ENCODE measurements at regions of chr14 and their contacts with region 1.

Region 1: GRCh38 chr14:94080471-94081289 is at the start of gene DDX24:
- DNase-seq: peak; percentile 96
- H3K4me3 Mint-ChIP-seq: peak within 1 kb of the TSS; percentile 99
- H3K27ac Mint-ChIP-seq: peak within 1 kb of the TSS; percentile 100
- H3K4me1 Mint-ChIP-seq: peaks cover 47% of the 10 kb centered on the region
- H3K27me3 Mint-ChIP-seq: no peaks in the 10 kb centered on the region
- total RNA-seq, gene DDX24: 276 and 277 TPM in 2 replicates

Region 2: GRCh38 chr14:94026173-94026888 is 54.3 kb before region 1 on chr14 and contains the start of gene OTUB2:
- intact Hi-C with region 1: loop called (anchors 2 kb)
- DNase-seq: peak; percentile 97
- H3K4me3 Mint-ChIP-seq: peak within 1 kb of the TSS; percentile 74
- H3K27ac Mint-ChIP-seq: peak within 1 kb of the TSS; percentile 56
- H3K4me1 Mint-ChIP-seq: peaks cover 34% of the 10 kb centered on the region
- H3K27me3 Mint-ChIP-seq: no peaks in the 10 kb centered on the region
- total RNA-seq, gene OTUB2: 2.1 and 2.3 TPM in 2 replicates

Region 3: GRCh38 chr14:94056579-94057308 is 23.9 kb before region 1 on chr14:
- intact Hi-C with region 1: loop called (anchors 2 kb)
- DNase-seq: peak; percentile 41
- H3K4me3 Mint-ChIP-seq: no peak overlapping the region
- H3K27ac Mint-ChIP-seq: peak overlapping the region; percentile 24
- H3K4me1 Mint-ChIP-seq: peaks cover 53% of the 10 kb centered on the region
- H3K27me3 Mint-ChIP-seq: no peaks in the 10 kb centered on the region

Region 4: DNA sequence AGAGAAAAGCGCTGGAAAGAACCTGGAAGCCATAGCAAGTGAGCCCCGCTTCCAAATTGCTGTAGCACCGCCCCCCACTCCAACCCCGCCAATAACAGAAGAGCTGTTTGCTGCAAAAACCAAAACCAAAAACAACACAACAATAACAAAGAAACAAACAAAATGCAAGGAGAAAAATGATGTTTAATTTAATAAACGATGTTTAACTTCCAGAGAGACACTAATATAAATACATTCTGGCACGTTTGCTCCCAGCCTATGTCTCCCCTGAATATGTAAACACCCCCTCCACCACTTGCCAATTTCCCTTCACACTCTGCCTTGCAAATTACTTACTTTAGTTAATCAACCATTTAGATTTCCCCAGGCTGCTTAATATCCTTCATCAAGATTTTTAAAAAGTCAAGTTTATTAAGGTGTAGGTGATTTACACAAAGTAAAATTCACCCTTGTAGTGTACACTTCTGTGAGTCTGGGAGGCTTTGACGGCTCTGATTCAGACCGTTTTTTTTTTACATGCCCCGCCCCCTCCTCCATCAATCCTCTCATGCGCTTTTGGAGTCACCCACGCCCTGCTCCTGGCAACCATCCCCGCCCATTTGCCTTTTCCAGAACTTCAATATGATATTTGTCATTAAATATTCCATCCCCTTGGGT is 49.2 kb after region 1 on chr14:
- intact Hi-C with region 1: loop called (anchors 1 kb)
- DNase-seq: peak; percentile 21
- H3K4me3 Mint-ChIP-seq: peak overlapping the region; percentile 81
- H3K27ac Mint-ChIP-seq: no peak overlapping the region
- H3K4me1 Mint-ChIP-seq: peaks cover 19% of the 10 kb centered on the region
- H3K27me3 Mint-ChIP-seq: peaks cover 20% of the 10 kb centered on the region

Region 5: GRCh38 chr14:94136575-94137331 is 56.1 kb after region 1 on chr14:
- intact Hi-C with region 1: loop called (anchors 2 kb)
- DNase-seq: peak; percentile 75
- H3K4me3 Mint-ChIP-seq: no peak overlapping the region
- H3K27ac Mint-ChIP-seq: no peak overlapping the region
- H3K4me1 Mint-ChIP-seq: peaks cover 6% of the 10 kb centered on the region
- H3K27me3 Mint-ChIP-seq: peaks cover 31% of the 10 kb centered on the region

Region 6: GRCh38 chr14:94173885-94174603 is 93.4 kb after region 1 on chr14 and contains the start of gene PPP4R4:
- intact Hi-C with region 1: loop called (anchors 5 kb)
- DNase-seq: peak; percentile 89
- H3K4me3 Mint-ChIP-seq: peak within 1 kb of the TSS; percentile 78
- H3K27ac Mint-ChIP-seq: no peak within 1 kb of the TSS
- H3K4me1 Mint-ChIP-seq: peaks cover 21% of the 10 kb centered on the region
- H3K27me3 Mint-ChIP-seq: peaks cover 57% of the 10 kb centered on the region
- total RNA-seq, gene PPP4R4: 1.2 and 1.8 TPM in 2 replicates

Measured in activated T-helper 2 cell treated with anti-CD3 and anti-CD28 coated beads, Interferon-gamma antibody, Interleukin-2, Interleukin-4, amounts not matched to agents 10 μg/mL and 5 μg/mL and 100 μg/mL, durations not matched to agents 14 hours and 24 hours and 36 hours (primary cell).